Endothelial cell of umbilical vein (primary cell): ENCODE measurements at regions of chr11 and their contacts with region 1.

Region 1: GRCh38 chr11:48116437-48117228 is 100.0 kb upstream of the OR4B1 start:
- DNase-seq: peak; percentile 39
- H3K4me3 ChIP-seq: no peak overlapping the region
- H3K27ac ChIP-seq: no peak overlapping the region
- H3K4me1 ChIP-seq: no peaks in the 10 kb centered on the region
- H3K27me3 ChIP-seq: no peaks in the 10 kb centered on the region
- CTCF ChIP-seq: peak; percentile 49 to 54
- POLR2A ChIP-seq: no peak

Region 2: DNA sequence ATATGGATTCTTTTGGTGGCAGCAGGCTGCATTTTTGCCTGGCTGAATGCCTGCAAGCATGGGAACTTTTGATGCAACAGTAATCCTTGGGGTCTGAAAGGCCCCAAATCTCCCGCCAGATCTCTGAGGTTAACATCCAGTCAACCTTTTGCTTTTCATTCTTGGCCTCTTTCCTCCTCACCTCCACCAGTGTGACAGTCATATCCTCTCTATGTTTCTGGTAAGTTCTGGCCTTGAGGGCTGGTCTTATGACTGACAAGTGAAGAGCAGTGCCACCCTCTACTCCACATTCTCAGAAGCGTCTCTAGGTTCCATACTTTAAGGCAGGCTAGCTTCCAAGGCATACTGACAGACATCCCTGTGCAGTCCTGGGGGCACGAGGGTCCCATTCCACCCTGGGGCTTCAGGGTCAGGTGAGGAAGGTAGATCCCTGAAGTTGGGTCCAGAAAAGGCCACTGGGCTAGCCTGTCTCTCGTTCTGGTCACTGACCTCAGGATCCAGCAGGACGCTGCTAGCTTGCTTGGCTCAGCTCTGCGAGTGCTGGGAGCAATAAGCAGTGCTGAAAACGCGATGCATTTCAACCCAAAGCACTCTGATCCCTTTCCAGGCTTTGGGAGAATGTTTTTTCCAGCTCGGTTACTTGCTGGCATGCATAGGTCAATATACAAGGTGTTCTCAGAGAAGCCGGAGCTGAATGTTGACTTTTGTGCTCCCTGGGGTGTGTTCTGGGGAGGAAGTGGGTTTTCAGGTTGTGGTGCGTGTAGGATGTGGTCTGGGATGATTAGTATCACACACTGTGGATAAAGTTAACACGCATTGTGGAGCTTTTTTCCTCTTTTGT is 61.1 kb before region 1 on chr11:
- CTCF ChIA-PET with region 1: no interaction called
- POLR2A ChIA-PET with region 1: no interaction called
- dilution Hi-C with region 1: no loop called
- intact Hi-C with region 1: no loop called
- DNase-seq: no peak
- H3K4me3 ChIP-seq: no peak overlapping the region
- H3K27ac ChIP-seq: no peak overlapping the region
- H3K4me1 ChIP-seq: no peaks in the 10 kb centered on the region
- H3K27me3 ChIP-seq: no peaks in the 10 kb centered on the region
- CTCF ChIP-seq: no peak
- POLR2A ChIP-seq: no peak

Region 3: DNA sequence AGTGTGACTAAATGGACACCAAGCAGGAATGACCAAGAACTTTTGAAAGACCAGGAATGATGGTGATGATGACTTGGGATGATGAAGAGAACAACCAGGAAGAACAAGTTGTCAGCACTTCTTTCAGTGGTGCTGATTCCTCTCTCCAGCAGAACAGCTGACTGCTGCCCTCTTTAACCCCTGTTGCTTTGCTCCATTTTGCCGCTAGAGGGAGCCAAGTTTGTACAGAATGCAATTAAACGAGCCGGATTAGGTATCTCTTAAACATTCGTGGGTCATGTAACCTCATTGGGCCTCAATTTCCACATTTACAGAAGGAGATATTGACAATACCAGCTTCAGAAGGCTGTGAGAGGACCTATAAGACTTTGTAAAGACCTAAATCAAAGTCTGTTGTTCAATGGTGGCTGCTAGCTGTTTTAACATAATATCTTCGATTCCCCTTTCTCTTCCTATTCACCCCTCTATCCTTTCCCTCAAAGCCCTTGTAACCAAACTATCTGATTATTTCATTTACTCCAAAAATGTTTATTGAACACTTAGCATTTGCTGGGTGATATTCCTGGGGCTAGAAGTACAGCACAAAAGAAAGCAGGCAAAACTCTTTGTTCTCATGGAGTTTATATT is 191.2 kb after region 1 on chr11:
- CTCF ChIA-PET with region 1: interaction called, 3 read pairs
- POLR2A ChIA-PET with region 1: no interaction called
- dilution Hi-C with region 1: no loop called
- intact Hi-C with region 1: loop called (anchors 2 kb)
- DNase-seq: peak; percentile 45
- H3K4me3 ChIP-seq: no peak overlapping the region
- H3K27ac ChIP-seq: no peak overlapping the region
- H3K4me1 ChIP-seq: no peaks in the 10 kb centered on the region
- H3K27me3 ChIP-seq: no peaks in the 10 kb centered on the region
- CTCF ChIP-seq: peak; percentile 71 to 89
- POLR2A ChIP-seq: no peak